ENCODE measurements at regions of chr14 and their contacts with region 1.

Region 1: GRCh38 chr14:99393047-99393655 is 87.5 kb downstream of the SETD3 start:
- H3K4me3 ChIP-seq: no peak overlapping the region
- H3K27ac ChIP-seq: no peak overlapping the region
- H3K4me1 ChIP-seq: 0 out of 2 replicates have a peak, but pooled peaks cover 7% of the 10 kb centered on the region
- CTCF ChIP-seq: peak; percentile 32; the same call in 1 of the 2 replicates

Region 2: DNA sequence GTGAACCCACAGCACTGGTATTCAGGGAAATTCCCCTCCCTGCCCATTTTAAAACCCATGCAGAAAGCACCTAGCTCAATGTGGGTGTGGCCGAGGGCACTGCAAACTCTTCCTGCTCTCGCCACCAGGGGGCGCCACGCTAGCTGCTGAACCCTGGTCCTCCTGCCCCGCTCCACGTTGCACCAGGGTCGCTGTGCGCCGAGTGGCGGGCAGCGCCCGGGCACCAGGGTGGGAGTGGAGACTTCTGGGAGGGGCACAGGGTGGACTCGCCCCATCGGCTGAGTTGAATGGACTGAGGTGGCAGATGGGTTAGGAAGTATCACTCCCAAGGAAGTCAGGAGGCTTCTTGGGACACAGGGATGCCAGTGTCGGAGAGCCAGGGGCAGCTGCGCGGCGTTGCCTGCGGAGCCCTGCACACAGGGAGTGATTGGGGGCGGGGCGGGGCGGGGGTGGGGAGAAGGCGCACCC is 73.0 kb before region 1 on chr14:
- CTCF ChIA-PET with region 1: interaction called, 15 read pairs
- POLR2A ChIA-PET with region 1: no interaction called
- H3K4me3 ChIP-seq: no peak overlapping the region; the same call in 1 of the 2 replicates
- H3K27ac ChIP-seq: no peak overlapping the region
- H3K4me1 ChIP-seq: no peaks in the 10 kb centered on the region
- CTCF ChIP-seq: peak; percentile 85

Region 3: GRCh38 chr14:99378782-99379214 is 14.4 kb before region 1 on chr14:
- CTCF ChIA-PET with region 1: interaction called, 54 read pairs
- POLR2A ChIA-PET with region 1: no interaction called
- H3K4me3 ChIP-seq: no peak overlapping the region
- H3K27ac ChIP-seq: no peak overlapping the region
- H3K4me1 ChIP-seq: no peaks in the 10 kb centered on the region
- CTCF ChIP-seq: no peak

Region 4: DNA sequence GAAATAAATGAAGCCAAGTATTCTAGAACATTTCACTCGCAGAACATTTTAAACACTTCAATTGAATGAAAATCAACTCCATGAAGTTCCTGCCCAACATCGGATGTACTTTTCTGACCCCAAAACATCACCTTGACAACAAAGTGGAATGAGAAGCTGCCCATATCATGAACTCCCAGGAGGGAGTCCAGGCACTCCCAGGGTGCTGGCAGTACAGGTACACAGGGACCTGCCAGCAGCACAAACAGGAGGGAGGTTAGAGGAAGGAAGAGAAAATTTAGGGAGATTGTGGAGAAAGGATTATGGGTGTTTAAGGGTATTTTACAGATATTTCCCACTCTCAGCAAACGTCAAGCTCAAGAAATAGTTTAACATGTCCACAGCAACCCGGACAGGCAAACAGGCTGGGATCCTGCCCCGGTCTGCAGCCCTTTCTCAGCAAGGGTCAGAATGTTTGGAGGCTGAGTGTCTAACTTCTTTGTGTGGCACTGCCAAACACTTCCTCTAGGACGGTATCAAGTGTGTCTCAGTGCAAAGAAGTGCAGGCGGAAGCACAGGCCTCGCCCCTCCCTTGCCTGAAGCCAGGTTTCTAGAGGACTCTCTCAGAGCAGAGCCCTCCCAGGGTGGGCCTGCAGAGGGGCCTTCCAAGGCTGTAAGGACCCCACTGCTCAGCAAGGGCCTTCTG is 15.3 kb after region 1 on chr14:
- CTCF ChIA-PET with region 1: interaction called, 175 read pairs
- POLR2A ChIA-PET with region 1: no interaction called
- H3K4me3 ChIP-seq: no peak overlapping the region
- H3K27ac ChIP-seq: no peak overlapping the region
- H3K4me1 ChIP-seq: no peaks in the 10 kb centered on the region
- CTCF ChIP-seq: no peak

Region 5: GRCh38 chr14:99654235-99654966 is 261.2 kb after region 1 on chr14:
- CTCF ChIA-PET with region 1: no interaction called
- POLR2A ChIA-PET with region 1: no interaction called
- H3K4me3 ChIP-seq: no peak overlapping the region
- H3K27ac ChIP-seq: no peak overlapping the region
- H3K4me1 ChIP-seq: peaks cover 2% of the 10 kb centered on the region; the same call in 1 of the 2 replicates
- CTCF ChIP-seq: no peak

Measured in HEK293 (cell line).